GM10248 (cell line): ENCODE measurements at regions of chr14 and their contacts with region 1.

Region 1: GRCh38 chr14:99518441-99519346 is 37.5 kb downstream of the CCNK start:
- DNase-seq: peak; percentile 91
- CTCF ChIP-seq: peak; percentile 99

Region 2: GRCh38 chr14:99615497-99616157 is 96.9 kb after region 1 on chr14:
- CTCF ChIA-PET with region 1: no interaction called
- POLR2A ChIA-PET with region 1: no interaction called
- DNase-seq: no peak
- CTCF ChIP-seq: no peak

Region 3: DNA sequence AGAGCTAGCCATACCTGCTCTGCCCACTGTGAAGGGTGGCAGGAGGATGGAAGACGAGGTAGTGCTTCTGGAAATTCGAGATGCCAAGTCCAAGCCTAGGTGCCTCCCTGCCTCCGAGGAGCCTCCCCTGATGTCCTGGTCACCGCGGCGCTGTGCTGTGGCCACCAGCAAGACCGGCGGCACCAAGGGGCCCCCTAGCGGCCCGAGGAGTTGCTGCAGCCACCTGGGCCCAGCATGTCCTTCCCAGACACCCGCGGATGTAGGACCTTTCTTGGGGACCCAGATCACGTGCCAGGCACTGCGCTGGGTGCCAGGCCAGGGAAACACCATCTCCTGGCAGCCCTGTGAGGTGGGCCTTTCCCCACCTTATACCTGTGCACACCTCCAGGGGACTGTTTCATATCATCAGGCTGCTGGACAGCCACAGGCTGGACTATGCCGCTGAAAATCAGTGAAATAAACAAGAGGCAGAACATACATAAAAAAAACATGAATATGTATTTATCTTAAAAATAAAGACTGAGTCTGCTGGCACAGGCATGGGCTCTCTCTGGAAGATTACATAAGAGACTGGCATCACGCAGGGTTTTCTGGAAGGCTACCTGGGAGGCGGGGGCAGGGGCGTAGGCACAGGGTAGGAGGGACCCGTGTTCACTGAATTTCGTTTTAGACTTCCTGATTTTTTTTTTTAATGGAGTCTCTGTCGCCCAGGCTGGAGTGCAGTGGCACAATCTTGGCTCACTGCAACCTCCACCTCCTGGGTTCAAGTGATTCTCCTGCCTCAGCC is 110.3 kb after region 1 on chr14:
- CTCF ChIA-PET with region 1: interaction called, 10 read pairs
- POLR2A ChIA-PET with region 1: interaction called, 3 read pairs
- DNase-seq: peak; percentile 85
- CTCF ChIP-seq: peak; percentile 87